Mucosa of descending colon (tissue), 3 donors: ENCODE measurements at regions of chr14 and their contacts with region 1.

Region 1: DNA sequence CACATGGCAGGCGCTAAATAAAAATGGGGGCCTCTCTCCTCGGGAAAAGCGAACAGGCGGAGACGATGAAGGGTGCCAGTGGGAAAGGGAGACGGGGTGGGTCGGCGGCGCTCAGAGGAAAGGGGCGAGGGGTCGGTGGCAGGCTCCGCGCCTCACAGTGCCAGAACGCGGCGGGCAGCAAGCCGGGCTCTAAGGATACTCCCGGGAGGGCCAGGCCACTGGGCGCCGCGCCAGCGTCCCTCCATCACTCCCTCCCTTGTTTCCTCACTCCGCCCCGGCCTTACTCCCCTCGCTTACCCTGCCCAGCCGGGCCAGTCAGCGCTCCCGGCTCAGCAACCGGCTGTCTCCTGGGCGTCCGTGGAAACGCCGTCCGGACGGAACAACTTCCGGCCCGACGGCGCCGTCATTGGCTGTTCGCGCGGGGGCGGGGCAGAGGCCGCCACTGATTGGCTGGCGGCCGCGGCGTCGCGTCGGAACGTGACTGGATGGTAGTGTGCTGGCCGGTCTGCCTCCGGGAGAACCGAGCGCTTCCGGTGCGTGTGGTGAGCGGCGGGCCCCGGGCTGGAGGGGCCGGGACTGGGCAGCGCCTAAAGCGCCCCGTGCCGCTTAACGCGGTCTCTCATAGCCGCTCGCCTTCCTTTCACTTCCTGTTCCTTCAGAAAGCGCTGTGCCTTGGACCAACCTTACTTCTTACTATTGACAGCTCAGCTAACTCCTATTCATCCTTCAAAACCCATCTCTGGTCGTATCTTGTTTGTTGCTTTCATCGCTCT is 53.0 kb downstream of the SLC25A47 start:
- DNase-seq: peak; percentile 95 to 97 (median 96)
- ATAC-seq: peak; percentile 92
- H3K4me3 ChIP-seq: peak within 1 kb of the TSS; percentile 45
- H3K4me1 ChIP-seq: peaks cover 13% of the 10 kb centered on the region
- CTCF ChIP-seq: no peak

Region 2: DNA sequence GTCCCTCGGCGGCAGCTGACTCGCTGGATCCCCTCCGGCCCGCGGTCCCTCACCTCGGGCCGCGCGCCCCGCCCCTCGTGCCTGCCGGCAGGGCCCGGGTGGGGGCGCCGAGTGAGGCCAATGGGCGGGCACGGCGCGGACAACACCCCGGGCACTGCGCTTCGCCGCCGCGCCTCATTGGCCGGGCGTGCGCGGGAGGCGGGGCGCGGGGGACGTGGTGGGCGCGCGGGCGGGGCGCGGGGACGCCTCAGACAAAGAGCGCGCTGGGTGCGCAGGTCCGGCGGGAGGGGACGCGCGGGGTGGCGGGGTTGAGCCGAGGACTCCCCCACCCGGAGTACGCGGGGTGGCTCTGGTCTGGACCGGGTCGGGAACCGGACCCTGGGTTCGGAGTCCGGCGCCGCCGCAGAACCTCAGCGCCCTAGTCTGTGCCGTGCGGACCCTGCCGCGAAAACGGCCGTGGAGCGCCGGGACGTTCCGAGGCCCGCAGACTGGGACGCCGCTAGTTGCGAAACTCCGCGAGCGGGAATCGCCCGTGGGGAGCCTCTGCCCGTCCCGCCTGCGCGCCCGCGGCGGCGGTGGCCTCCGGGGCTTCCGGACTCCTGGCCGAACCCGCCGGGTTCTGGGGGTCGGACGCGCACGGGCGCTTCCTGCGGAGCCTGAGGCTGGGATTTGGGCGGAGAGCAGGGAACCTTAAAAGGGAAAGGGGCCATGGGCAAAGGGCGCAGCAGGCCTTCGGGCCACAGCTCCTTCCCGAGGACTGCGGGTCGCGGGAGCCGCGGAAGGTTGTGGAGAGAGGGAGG is 69.5 kb before region 1 on chr14 and contains the start of gene SLC25A29:
- intact Hi-C with region 1: loop called in 1 of 2 experiments (anchors 10 kb)
- DNase-seq: peak; percentile 86 to 90 (median 90)
- ATAC-seq: peak; percentile 92
- H3K4me3 ChIP-seq: peak within 1 kb of the TSS; percentile 56
- H3K4me1 ChIP-seq: peaks cover 20% of the 10 kb centered on the region
- CTCF ChIP-seq: no peak
- total RNA-seq, gene SLC25A29: 19.6 to 28.2 (median 28.1) TPM